Prostate gland (tissue), 2 donors: ENCODE measurements at regions of chr1 and their contacts with region 1.

Region 1: DNA sequence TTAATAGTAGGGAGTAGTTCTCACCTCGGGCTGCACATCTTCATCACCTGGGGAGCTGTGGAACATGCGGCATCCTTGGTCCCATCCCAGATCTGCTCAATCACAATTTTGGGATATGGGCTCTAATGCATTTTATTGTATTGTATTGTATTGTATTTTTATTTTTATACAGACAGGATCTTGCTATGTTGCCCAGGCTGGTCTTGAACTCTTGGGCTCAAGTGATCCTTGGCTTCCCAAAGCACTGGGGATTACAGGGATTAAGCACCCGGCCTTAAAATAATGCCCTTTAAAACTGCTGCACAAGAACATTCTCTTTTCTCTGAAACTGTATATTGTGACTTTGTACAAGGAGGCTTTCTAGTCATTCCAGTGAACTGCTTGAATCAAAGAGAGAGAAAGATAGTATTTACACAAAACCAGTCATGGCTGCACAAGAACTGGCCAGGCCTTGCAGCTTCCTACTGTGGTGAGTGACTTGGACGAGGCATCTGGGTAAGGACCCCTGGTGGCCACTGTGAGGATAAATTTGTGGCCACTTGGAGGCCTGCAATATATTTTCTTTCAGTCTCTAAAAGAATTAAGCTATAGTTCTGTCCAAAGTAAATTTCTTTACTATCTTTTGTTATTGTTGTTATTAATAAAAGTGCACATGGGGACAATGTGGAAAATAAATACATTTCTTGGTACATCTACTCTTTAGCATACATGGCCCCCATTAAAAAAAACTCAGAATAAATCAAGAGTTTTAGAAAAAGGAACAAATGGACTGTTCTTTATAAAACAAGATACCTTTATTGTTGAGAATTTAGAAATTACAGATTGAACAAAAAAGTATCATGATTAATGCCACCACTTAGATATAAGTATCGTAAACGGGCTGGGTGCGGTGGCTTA is 48.0 kb downstream of the TBCE start:
- DNase-seq: peak; percentile 63
- H3K4me3 ChIP-seq: no peak overlapping the region
- H3K27ac ChIP-seq: no peak overlapping the region
- H3K4me1 ChIP-seq: no peaks in the 10 kb centered on the region
- H3K27me3 ChIP-seq: no peaks in the 10 kb centered on the region
- CTCF ChIP-seq: peak; percentile 45 to 82 (median 80)
- POLR2A ChIP-seq: no peak

Region 2: GRCh38 chr1:235093696-235094592 is 321.3 kb before region 1 on chr1:
- intact Hi-C with region 1: loop called (anchors 5 kb)
- DNase-seq: peak; percentile 68
- H3K4me3 ChIP-seq: no peak overlapping the region
- H3K27ac ChIP-seq: no peak overlapping the region
- H3K4me1 ChIP-seq: no peaks in the 10 kb centered on the region
- H3K27me3 ChIP-seq: no peaks in the 10 kb centered on the region
- CTCF ChIP-seq: peak; percentile 62 to 86 (median 79)
- POLR2A ChIP-seq: no peak

Region 3: DNA sequence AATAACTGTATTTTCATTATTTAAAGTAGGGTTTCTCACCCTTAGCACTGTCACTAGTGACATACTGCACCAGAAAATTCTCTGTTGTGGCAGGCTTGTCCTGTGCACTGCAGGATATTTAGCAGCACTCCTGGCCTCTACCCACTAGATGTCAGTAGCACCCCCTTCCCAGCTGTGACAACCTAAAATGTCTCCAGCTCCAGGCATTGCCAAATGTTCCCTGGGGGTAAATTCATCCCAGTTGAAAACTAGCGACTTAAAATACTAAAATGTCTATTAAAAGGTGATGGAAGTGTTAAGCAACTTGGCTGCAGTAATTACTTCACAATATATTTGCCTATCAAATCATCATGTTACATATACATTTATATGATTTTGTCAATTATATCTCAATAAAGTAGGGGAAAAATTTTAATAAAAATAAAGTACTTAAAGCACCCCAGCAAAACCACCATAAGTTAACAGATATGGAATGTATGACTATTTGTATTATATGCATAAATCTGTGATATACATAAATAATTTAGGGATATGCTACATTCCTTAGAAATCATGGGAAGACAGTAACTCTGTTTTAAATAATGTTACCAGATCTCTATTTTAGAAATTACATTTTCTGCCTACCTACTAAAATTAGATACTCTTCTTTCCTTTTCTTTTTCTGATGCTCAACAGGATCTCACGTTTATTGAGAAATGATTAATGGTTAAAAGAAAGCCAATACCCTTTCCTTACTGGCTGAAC is 161.9 kb before region 1 on chr1:
- intact Hi-C with region 1: loop called (anchors 2 kb)
- DNase-seq: peak; percentile 33
- H3K4me3 ChIP-seq: no peak overlapping the region
- H3K27ac ChIP-seq: no peak overlapping the region
- H3K4me1 ChIP-seq: no peaks in the 10 kb centered on the region
- H3K27me3 ChIP-seq: no peaks in the 10 kb centered on the region
- CTCF ChIP-seq: peak; percentile 30 to 73 (median 58)
- POLR2A ChIP-seq: no peak